ENCODE measurements at regions of chr10 and their contacts with region 1.

Region 1: DNA sequence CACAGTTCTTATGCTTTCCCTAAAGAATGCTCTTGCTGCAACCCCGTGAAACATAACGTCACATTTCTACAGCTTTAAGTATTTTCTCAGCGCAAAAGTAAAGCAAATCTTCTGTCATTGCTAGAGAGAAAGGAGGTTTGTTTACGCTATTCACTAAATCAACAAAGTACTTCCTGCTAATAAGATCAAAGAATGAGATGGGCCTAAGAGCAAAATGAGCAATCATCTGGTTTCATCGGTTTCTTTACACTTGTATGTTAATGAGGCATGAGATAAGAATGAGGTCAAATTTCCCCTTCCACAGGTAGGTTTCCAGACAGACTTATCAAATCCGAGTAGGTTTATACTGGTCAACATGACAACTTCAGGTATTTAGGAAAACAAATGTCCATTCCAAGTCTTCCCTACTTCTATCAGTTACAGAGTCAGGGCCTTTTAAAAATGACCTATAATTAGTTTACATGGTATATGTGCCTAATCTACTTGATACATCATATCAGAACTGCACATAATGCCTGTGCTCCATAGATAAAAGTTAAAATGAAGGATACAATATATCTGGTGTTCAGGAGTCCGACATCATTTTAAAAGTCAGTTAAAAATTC is 8.4 kb downstream of the USP6NL start:
- DNase-seq: peak in 3 of 14 experiments; percentile 12 to 28 (median 24)
- ATAC-seq: no peak
- H3K4me3 ChIP-seq: no peak overlapping the region
- H3K4me3 Mint-ChIP-seq: peak overlapping the region; percentile 1
- H3K27ac ChIP-seq: no peak overlapping the region
- H3K27ac Mint-ChIP-seq: no peak overlapping the region
- H3K4me1 ChIP-seq: no peaks in the 10 kb centered on the region
- H3K4me1 Mint-ChIP-seq: peaks cover 36% of the 10 kb centered on the region
- H3K27me3 ChIP-seq: no peaks in the 10 kb centered on the region
- H3K27me3 Mint-ChIP-seq: no peaks in the 10 kb centered on the region
- CTCF ChIP-seq: no peak

Region 2: DNA sequence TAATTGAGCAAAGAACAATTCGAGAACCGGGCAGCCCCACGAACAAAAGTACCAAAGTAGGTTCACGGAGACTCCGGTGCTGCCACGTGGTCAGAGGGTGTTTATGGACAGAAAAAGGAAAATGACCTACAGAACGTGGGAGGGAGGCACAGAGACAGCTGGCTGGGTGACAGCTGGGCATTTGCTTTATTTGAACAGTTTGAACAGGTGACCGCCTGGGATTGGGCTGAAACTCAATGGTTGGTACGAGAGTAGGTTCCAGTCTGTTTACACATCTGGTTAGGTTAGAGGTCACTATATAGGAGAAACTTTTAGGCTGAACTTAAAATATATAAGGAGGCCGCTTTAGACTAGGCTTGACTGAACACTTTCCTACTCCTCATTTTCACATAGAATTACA is 636.0 kb before region 1 on chr10:
- CTCF ChIA-PET with region 1: no interaction called
- POLR2A ChIA-PET with region 1: no interaction called
- intact Hi-C with region 1: no loop called
- DNase-seq: no peak
- ATAC-seq: no peak
- H3K4me3 ChIP-seq: no peak overlapping the region
- H3K4me3 Mint-ChIP-seq: no peak overlapping the region
- H3K27ac ChIP-seq: no peak overlapping the region
- H3K27ac Mint-ChIP-seq: no peak overlapping the region
- H3K4me1 ChIP-seq: no peaks in the 10 kb centered on the region
- H3K4me1 Mint-ChIP-seq: no peaks in the 10 kb centered on the region
- H3K27me3 ChIP-seq: peaks cover 0 to 3% of the 10 kb centered on the region in 2 experiments
- H3K27me3 Mint-ChIP-seq: peaks cover 6% of the 10 kb centered on the region
- CTCF ChIP-seq: no peak

Region 3: GRCh38 chr10:11533328-11533781 is 69.7 kb before region 1 on chr10:
- CTCF ChIA-PET with region 1: no interaction called
- POLR2A ChIA-PET with region 1: no interaction called
- intact Hi-C with region 1: loop called in 1 of 2 experiments (anchors 5 kb)
- DNase-seq: no peak
- ATAC-seq: peak; percentile 24
- H3K4me3 ChIP-seq: no peak overlapping the region
- H3K4me3 Mint-ChIP-seq: no peak overlapping the region
- H3K27ac ChIP-seq: no peak overlapping the region
- H3K27ac Mint-ChIP-seq: no peak overlapping the region
- H3K4me1 ChIP-seq: peaks cover 3% of the 10 kb centered on the region
- H3K4me1 Mint-ChIP-seq: peaks cover 35% of the 10 kb centered on the region
- H3K27me3 ChIP-seq: no peaks in the 10 kb centered on the region
- H3K27me3 Mint-ChIP-seq: no peaks in the 10 kb centered on the region
- CTCF ChIP-seq: no peak